ENCODE measurements at regions of chr13 and their contacts with region 1.

Region 1: GRCh38 chr13:23579072-23579895 is 9.1 kb downstream of the TNFRSF19 start:
- DNase-seq: peak; percentile 93
- H3K4me3 ChIP-seq: peak overlapping the region; percentile 80 to 82
- H3K27ac ChIP-seq: peak overlapping the region; percentile 92 to 95
- H3K4me1 ChIP-seq: no peaks in the 10 kb centered on the region
- H3K27me3 ChIP-seq: no peaks in the 10 kb centered on the region
- CTCF ChIP-seq: peak in 1 of 4 experiments; percentile 1
- POLR2A ChIP-seq: peak; percentile 58

Region 2: GRCh38 chr13:23707674-23708073 is 128.4 kb after region 1 on chr13:
- intact Hi-C with region 1: loop called (anchors 5 kb)
- DNase-seq: no peak
- H3K4me3 ChIP-seq: no peak overlapping the region
- H3K27ac ChIP-seq: no peak overlapping the region
- H3K4me1 ChIP-seq: no peaks in the 10 kb centered on the region
- H3K27me3 ChIP-seq: no peaks in the 10 kb centered on the region
- CTCF ChIP-seq: no peak
- POLR2A ChIP-seq: no peak

Region 3: GRCh38 chr13:24063281-24063877 is 484.1 kb after region 1 on chr13:
- intact Hi-C with region 1: no loop called
- DNase-seq: no peak
- H3K4me3 ChIP-seq: no peak overlapping the region
- H3K27ac ChIP-seq: no peak overlapping the region
- H3K4me1 ChIP-seq: no peaks in the 10 kb centered on the region
- H3K27me3 ChIP-seq: no peaks in the 10 kb centered on the region
- CTCF ChIP-seq: no peak
- POLR2A ChIP-seq: no peak